ENCODE measurements at regions of chr16 and their contacts with region 1.

Region 1: GRCh38 chr16:23434380-23434779 is 18.6 kb downstream of the COG7 start:
- DNase-seq: no peak
- H3K4me3 ChIP-seq: no peak overlapping the region
- H3K27ac ChIP-seq: no peak overlapping the region
- H3K4me1 ChIP-seq: peaks cover 0 to 22% (median 9%) of the 10 kb centered on the region in 6 donors
- H3K27me3 ChIP-seq: no peaks in the 10 kb centered on the region
- CTCF ChIP-seq: peak; percentile 69 to 90 (median 83)
- POLR2A ChIP-seq: no peak

Region 2: DNA sequence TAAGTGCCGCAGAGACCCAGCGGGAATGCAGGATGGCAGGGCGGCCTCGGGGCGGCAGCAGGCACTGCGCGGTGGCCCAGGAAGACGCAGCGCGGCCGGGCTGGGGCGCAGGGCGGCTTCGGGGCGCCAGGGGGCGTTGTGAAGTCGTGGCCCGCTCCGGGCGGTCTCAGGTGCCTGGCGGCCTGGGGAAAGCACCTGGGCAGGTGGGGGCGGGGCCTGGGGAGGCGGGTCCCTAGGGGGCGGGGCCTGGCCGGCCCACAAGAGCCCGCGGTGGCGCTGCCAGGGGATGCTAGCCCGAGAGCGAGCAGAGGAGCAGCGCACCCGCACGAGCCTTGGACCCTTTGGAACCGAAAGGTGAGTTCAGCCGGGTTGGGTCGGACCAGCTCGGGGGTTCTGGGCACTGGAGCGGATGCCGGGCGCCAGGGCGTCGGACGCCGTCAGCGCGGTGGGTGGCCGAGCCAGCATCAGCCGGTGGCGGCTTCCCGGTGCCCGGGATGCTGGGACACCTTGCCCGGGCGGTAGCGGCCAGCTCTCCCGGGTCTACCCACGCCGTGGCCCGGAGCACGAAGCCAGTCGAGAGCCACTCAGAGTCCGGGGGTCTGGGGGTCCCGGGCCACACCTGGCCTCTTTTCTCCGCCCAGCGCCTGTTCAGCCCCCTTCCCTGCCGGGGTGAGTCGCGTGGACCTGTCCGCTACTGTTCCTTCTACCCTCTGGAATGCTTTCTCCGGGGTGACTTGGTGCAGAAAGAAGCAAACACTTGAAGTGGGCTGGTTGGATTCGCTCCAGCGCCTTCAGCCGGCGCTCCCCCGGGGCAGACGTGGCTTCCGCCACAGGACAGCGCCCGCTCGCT is 251.7 kb before region 1 on chr16 and contains the start of gene SCNN1G:
- intact Hi-C with region 1: loop called (anchors 5 kb)
- DNase-seq: peak; percentile 92
- H3K4me3 ChIP-seq: peak within 1 kb of the TSS; percentile 15 to 69 (median 34)
- H3K27ac ChIP-seq: no peak within 1 kb of the TSS
- H3K4me1 ChIP-seq: peaks cover 12 to 20% (median 14%) of the 10 kb centered on the region in 6 donors
- H3K27me3 ChIP-seq: peaks cover 0 to 96% (median 45%) of the 10 kb centered on the region in 7 donors
- CTCF ChIP-seq: peak; percentile 59 to 96 (median 91)
- POLR2A ChIP-seq: no peak
- total RNA-seq, gene SCNN1G: not detected

Region 3: GRCh38 chr16:24309222-24309905 is 875.0 kb after region 1 on chr16:
- intact Hi-C with region 1: no loop called
- DNase-seq: no peak
- H3K4me3 ChIP-seq: no peak overlapping the region
- H3K27ac ChIP-seq: no peak overlapping the region
- H3K4me1 ChIP-seq: no peaks in the 10 kb centered on the region
- H3K27me3 ChIP-seq: peaks cover 0 to 46% (median 0%) of the 10 kb centered on the region in 7 donors
- CTCF ChIP-seq: no peak
- POLR2A ChIP-seq: no peak

Region 4: DNA sequence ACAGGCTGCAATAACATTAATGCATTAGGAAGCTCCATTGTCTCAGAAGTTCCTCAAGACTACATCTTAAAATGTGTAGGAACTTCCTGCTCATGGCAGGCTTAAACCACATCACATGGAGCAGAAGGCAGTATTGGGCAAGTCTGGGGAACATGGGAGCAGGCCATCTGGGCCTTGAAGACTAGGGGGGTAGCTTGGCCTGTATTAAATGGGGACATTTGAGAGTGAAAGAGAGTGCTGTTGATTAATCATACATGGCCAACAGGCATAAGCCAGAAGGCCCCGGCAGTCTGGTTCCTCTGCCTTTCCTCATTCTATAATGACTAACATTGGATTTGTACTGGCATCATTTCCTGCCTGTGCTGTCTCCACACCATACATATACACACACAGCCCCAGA is 1386.1 kb after region 1 on chr16:
- intact Hi-C with region 1: no loop called
- DNase-seq: no peak
- H3K4me3 ChIP-seq: no peak overlapping the region
- H3K27ac ChIP-seq: no peak overlapping the region
- H3K4me1 ChIP-seq: no peaks in the 10 kb centered on the region
- H3K27me3 ChIP-seq: no peaks in the 10 kb centered on the region
- CTCF ChIP-seq: no peak
- POLR2A ChIP-seq: no peak